Cardiac septum (tissue), 1 donor: ENCODE measurements at regions of chr7 and their contacts with region 1.

Region 1: DNA sequence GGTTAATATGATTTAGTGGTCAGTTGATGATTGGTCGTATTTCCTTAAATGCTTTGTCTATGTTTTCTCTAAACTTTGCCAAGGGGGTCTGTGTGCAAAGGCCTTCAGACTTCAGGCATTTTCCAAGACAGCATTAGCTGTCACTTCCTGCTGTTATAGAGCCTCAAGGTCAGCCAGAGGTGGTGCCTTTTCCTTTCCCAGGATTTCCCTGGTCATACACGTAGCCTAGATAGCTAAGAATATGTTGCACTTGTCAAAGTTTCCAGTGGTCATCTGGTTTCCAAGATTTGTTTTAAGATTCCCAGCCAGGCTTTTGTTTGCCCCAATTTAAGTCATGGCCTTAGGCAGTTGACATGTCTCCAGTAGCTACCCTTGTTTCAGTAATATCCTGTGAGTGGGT is 133.2 kb upstream of the IGFBP3 start:
- DNase-seq: no peak

Region 2: DNA sequence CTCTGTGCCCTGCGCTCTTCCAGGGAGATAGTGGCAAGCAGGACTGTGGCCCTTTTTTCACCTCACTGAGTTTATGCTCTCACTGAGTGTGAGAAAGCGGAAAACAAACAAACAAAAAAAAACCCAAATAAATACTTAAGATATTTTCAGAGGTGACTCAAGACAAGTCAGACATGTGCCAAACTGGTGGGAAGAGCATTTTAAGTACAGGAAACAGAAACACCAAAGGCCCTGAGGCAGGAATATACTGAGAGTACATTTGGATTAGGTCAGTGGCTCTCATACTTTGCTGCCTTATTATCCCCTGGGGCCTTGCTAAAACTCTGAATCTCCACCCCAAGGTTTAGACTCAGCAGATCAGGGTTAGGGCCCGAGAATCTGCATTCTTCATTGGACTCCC is 21.3 kb before region 1 on chr7:
- intact Hi-C with region 1: no loop called
- DNase-seq: no peak

Region 3: GRCh38 chr7:46215987-46216567 is 161.8 kb after region 1 on chr7:
- intact Hi-C with region 1: loop called (anchors 5 kb)
- DNase-seq: no peak